Mammary epithelial cell (primary cell): ENCODE measurements at regions of chr1 and their contacts with region 1.

Region 1: DNA sequence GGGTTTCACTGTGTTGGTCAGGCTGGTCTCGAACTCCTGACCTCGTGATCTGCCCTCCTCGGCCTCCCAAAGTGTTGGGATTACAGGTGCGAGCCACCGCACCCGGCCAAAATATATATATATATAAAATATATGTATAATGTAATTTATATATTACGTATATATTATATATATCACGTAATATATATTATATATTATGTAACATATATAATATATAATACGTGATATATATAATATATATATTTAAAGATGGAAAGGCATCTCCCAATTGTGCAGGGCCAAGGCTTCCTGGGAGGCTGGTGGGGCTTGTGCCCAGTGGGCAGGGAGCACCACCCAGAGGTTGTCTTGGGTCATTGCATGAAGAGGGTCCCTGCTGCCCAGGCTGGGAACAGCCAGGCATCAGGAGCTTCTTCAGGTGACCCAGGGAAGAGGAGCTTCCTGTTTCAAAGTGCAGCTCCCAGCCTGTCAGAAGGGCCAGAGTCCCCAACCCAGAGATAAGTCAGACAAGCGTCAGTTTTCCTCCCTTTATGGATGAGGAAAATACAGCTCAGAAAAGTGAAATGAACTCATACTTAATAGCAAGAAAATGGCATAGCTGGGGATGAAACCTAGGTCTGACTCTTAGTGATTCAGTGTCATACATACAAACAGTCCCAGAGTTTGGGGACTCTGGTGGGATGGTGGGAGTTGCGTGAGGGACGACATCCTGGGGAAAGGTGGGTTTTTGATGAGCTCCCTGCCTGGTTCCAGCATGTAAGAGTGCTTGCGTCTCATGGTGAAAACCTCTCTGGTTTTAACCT is 12.0 kb downstream of the UBE2Q1 start:
- DNase-seq: peak; percentile 44
- H3K4me3 ChIP-seq: no peak overlapping the region
- H3K27ac ChIP-seq: no peak overlapping the region
- H3K4me1 ChIP-seq: peaks cover 13% of the 10 kb centered on the region
- H3K27me3 ChIP-seq: no peaks in the 10 kb centered on the region
- CTCF ChIP-seq: peak; percentile 55 to 81

Region 2: DNA sequence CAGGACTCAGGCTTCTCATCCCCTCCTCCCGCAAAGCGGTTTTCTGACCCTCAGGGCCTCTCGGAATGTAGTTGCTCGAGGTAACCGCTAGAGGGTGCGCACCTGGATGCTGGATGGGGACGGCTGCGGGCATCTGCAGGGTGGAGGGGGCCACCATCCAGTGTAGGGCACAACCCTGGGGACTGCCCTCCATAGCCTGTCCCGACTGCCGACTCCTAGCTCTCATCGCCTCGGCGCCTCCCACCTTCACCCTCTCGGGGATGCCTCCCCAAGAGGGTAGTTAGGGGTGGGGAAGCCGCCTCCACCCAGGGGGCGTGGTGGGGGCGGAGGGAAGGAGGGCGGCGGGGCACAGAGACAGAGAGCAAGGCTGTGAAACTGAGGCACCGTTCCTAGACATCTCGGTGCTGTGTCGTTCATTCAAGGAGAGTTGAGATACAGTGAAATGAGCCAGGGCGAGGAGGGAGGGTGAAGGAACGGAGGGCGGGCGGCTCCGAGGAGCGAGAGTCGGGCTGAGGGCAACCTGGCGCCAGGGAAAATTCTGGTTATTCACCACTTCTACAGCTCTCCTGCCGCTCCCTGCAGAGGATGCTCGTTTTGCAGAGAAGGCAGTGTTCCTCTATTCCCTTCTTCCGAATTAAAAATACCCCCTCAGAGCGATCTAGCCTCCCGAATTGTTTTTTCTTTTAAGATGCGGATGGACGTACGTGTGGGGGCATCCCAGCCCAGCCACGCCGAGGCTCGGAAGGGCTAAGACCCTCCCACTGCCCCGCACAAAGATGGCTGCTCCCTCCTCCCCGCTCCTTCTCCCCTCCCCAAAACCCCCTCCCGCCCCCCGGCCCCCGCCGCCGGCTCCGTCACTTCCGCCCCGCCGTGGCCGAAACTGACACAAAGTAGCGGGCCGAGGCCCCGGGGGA is 221.5 kb before region 1 on chr1 and contains the start of gene ATP8B2:
- CTCF ChIA-PET with region 1: interaction called, 4 read pairs
- dilution Hi-C with region 1: no loop called
- in situ Hi-C with region 1: no loop called
- intact Hi-C with region 1: loop called (anchors 5 kb)
- DNase-seq: peak; percentile 53
- H3K4me3 ChIP-seq: peak within 1 kb of the TSS; percentile 55 to 65 (median 63)
- H3K27ac ChIP-seq: no peak within 1 kb of the TSS
- H3K4me1 ChIP-seq: peaks cover 29% of the 10 kb centered on the region
- H3K27me3 ChIP-seq: no peaks in the 10 kb centered on the region
- CTCF ChIP-seq: peak; percentile 79 to 92
- total RNA-seq, gene ATP8B2: 11.5 TPM

Region 3: GRCh38 chr1:154469844-154470560 is 76.5 kb before region 1 on chr1:
- CTCF ChIA-PET with region 1: no interaction called
- dilution Hi-C with region 1: no loop called
- in situ Hi-C with region 1: no loop called
- intact Hi-C with region 1: no loop called
- DNase-seq: no peak
- H3K4me3 ChIP-seq: no peak overlapping the region
- H3K27ac ChIP-seq: no peak overlapping the region
- H3K4me1 ChIP-seq: peaks cover 7% of the 10 kb centered on the region
- H3K27me3 ChIP-seq: no peaks in the 10 kb centered on the region
- CTCF ChIP-seq: no peak

Region 4: DNA sequence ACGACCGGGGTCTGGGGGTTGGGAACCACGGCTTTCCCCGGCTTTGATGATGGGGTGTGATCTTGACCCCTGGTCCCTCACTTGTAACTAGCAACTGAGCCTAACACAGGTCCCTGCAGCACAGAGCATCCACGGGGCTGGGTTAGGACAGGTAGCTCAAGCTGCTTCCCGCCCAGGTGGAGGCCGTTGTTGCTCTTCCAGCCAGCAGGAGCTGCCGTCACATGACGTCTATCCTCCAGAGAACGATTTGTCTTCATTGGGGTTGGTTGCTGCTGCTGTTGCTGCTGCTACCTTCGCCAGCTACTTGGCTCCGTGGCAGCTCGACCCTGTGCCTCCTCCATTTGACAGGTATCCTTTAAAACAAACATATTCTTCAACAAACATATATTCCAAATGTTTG is 135.8 kb after region 1 on chr1:
- CTCF ChIA-PET with region 1: no interaction called
- dilution Hi-C with region 1: no loop called
- in situ Hi-C with region 1: no loop called
- intact Hi-C with region 1: no loop called
- DNase-seq: no peak
- H3K4me3 ChIP-seq: no peak overlapping the region
- H3K27ac ChIP-seq: no peak overlapping the region
- H3K4me1 ChIP-seq: no peaks in the 10 kb centered on the region
- H3K27me3 ChIP-seq: no peaks in the 10 kb centered on the region
- CTCF ChIP-seq: no peak